CD4-positive, alpha-beta memory T cell (primary cell): ENCODE measurements at regions of chr11 and their contacts with region 1.

Region 1: GRCh38 chr11:35165423-35166368 is 26.7 kb downstream of the CD44 start:
- DNase-seq: peak; percentile 96 to 98 (median 98)
- H3K4me3 ChIP-seq: peak overlapping the region; percentile 36 to 37
- H3K4me3 Mint-ChIP-seq: peak overlapping the region; percentile 77 to 87 (median 84)
- H3K27ac ChIP-seq: peak overlapping the region; percentile 96
- H3K27ac Mint-ChIP-seq: peak overlapping the region; percentile 93 to 100 (median 100)
- H3K4me1 ChIP-seq: peaks cover 98% of the 10 kb centered on the region
- H3K4me1 Mint-ChIP-seq: peaks cover 85 to 100% (median 94%) of the 10 kb centered on the region in 4 donors
- H3K27me3 ChIP-seq: no peaks in the 10 kb centered on the region
- H3K27me3 Mint-ChIP-seq: no peaks in the 10 kb centered on the region

Region 2: GRCh38 chr11:34860034-34860433 is 305.7 kb before region 1 on chr11:
- CTCF ChIA-PET with region 1: no interaction called
- POLR2A ChIA-PET with region 1: no interaction called
- intact Hi-C with region 1: no loop called
- DNase-seq: no peak
- H3K4me3 ChIP-seq: no peak overlapping the region
- H3K4me3 Mint-ChIP-seq: no peak overlapping the region
- H3K27ac ChIP-seq: no peak overlapping the region
- H3K27ac Mint-ChIP-seq: no peak overlapping the region
- H3K4me1 ChIP-seq: no peaks in the 10 kb centered on the region
- H3K4me1 Mint-ChIP-seq: no peaks in the 10 kb centered on the region
- H3K27me3 ChIP-seq: no peaks in the 10 kb centered on the region
- H3K27me3 Mint-ChIP-seq: no peaks in the 10 kb centered on the region

Region 3: GRCh38 chr11:35006389-35007128 is 159.1 kb before region 1 on chr11:
- CTCF ChIA-PET with region 1: interaction called, 45 read pairs
- POLR2A ChIA-PET with region 1: interaction called, 47 read pairs
- intact Hi-C with region 1: no loop called
- DNase-seq: peak in 3 of 5 donors; percentile 11 to 48 (median 16)
- H3K4me3 ChIP-seq: peak overlapping the region in 1 of 2 donors; percentile 10
- H3K4me3 Mint-ChIP-seq: peak overlapping the region in 7 of 8 donors; percentile 7 to 79 (median 47)
- H3K27ac ChIP-seq: no peak overlapping the region
- H3K27ac Mint-ChIP-seq: peak overlapping the region; percentile 72 to 88 (median 81)
- H3K4me1 ChIP-seq: peaks cover 32% of the 10 kb centered on the region
- H3K4me1 Mint-ChIP-seq: peaks cover 23 to 62% (median 45%) of the 10 kb centered on the region in 4 donors
- H3K27me3 ChIP-seq: no peaks in the 10 kb centered on the region
- H3K27me3 Mint-ChIP-seq: no peaks in the 10 kb centered on the region

Region 4: DNA sequence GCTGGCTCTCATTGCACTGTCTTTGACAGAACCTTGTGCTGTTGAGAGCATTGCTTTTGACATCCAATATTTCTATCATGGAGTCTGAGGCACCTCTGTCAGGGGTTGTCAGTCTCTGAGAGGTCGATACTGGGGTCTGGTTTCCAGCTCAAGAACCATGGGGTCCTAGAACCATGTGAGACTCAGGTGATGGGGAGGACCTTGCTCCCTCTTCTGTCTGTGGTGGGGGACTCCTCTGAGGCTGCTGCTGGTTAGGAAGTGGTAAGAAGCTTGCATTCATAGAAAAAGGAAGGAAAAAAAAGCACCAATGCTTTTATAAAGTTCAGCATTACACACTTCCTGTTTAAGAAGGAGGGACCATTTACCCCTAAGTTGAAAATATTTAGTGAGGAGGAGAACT is 118.5 kb before region 1 on chr11:
- CTCF ChIA-PET with region 1: interaction called, 10 read pairs
- POLR2A ChIA-PET with region 1: interaction called, 87 read pairs
- intact Hi-C with region 1: loop called (anchors 1 kb)
- DNase-seq: peak; percentile 73 to 81 (median 77)
- H3K4me3 ChIP-seq: peak overlapping the region in 1 of 2 donors; percentile 17
- H3K4me3 Mint-ChIP-seq: peak overlapping the region in 7 of 8 donors; percentile 47 to 84 (median 65)
- H3K27ac ChIP-seq: peak overlapping the region; percentile 91
- H3K27ac Mint-ChIP-seq: peak overlapping the region; percentile 96 to 100 (median 100)
- H3K4me1 ChIP-seq: peaks cover 87% of the 10 kb centered on the region
- H3K4me1 Mint-ChIP-seq: peaks cover 63 to 93% (median 79%) of the 10 kb centered on the region in 4 donors
- H3K27me3 ChIP-seq: no peaks in the 10 kb centered on the region
- H3K27me3 Mint-ChIP-seq: no peaks in the 10 kb centered on the region

Region 5: DNA sequence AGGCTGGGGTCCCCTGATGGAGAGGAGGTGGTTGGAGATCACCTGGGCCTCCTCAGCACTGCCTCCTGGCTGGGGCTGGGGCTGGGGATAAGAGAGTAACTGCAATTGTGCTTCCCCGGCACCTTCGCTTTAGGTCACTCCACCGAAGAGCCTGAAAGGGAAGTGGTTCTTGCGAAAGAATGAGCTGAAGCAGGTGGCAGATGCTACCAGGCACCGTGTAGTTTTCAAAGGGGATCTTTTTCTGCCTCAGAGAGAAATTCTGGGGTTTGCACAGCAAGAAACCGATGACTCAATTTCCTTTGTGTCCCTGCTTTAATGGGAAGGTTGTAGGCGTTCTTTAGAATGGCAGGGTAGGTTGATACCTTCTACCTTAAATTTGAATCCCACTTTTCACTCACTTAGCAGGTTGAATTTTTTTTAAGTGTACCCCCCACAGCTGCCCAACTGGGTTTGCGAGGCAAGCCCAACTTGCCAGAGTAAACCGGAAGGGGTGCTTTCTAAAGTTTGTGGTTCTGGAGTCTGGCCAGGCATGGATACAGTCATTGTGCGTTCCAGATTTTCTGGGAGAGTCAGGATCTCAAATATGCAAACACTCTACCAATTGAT is 21.5 kb before region 1 on chr11:
- CTCF ChIA-PET with region 1: interaction called, 151 read pairs
- POLR2A ChIA-PET with region 1: interaction called, 1,106 read pairs
- intact Hi-C with region 1: loop called (anchors 1 kb)
- DNase-seq: peak; percentile 67 to 90 (median 76)
- H3K4me3 ChIP-seq: peak overlapping the region; percentile 55 to 59
- H3K4me3 Mint-ChIP-seq: peak overlapping the region; percentile 83 to 99 (median 98)
- H3K27ac ChIP-seq: peak overlapping the region; percentile 73
- H3K27ac Mint-ChIP-seq: peak overlapping the region; percentile 93 to 100 (median 95)
- H3K4me1 ChIP-seq: peaks cover 72% of the 10 kb centered on the region
- H3K4me1 Mint-ChIP-seq: peaks cover 60 to 88% (median 70%) of the 10 kb centered on the region in 4 donors
- H3K27me3 ChIP-seq: no peaks in the 10 kb centered on the region
- H3K27me3 Mint-ChIP-seq: no peaks in the 10 kb centered on the region

Region 6: GRCh38 chr11:35214792-35215193 is 49.1 kb after region 1 on chr11:
- CTCF ChIA-PET with region 1: interaction called, 3 read pairs
- POLR2A ChIA-PET with region 1: interaction called, 3 read pairs
- intact Hi-C with region 1: loop called (anchors 1 kb)
- DNase-seq: peak in 1 of 5 donors; percentile 77
- H3K4me3 ChIP-seq: no peak overlapping the region
- H3K4me3 Mint-ChIP-seq: peak overlapping the region in 6 of 8 donors; percentile 7 to 76 (median 16)
- H3K27ac ChIP-seq: no peak overlapping the region
- H3K27ac Mint-ChIP-seq: peak overlapping the region; percentile 78 to 99 (median 91)
- H3K4me1 ChIP-seq: peaks cover 65% of the 10 kb centered on the region
- H3K4me1 Mint-ChIP-seq: peaks cover 57 to 92% (median 73%) of the 10 kb centered on the region in 4 donors
- H3K27me3 ChIP-seq: no peaks in the 10 kb centered on the region
- H3K27me3 Mint-ChIP-seq: no peaks in the 10 kb centered on the region

Region 7: GRCh38 chr11:35305670-35306382 is 140.1 kb after region 1 on chr11:
- CTCF ChIA-PET with region 1: interaction called, 12 read pairs
- POLR2A ChIA-PET with region 1: interaction called, 15 read pairs
- intact Hi-C with region 1: loop called (anchors 5 kb)
- DNase-seq: peak in 4 of 5 donors; percentile 35 to 49 (median 44)
- H3K4me3 ChIP-seq: no peak overlapping the region
- H3K4me3 Mint-ChIP-seq: peak overlapping the region; percentile 58 to 85 (median 79)
- H3K27ac ChIP-seq: no peak overlapping the region
- H3K27ac Mint-ChIP-seq: peak overlapping the region; percentile 8 to 95 (median 90)
- H3K4me1 ChIP-seq: peaks cover 24% of the 10 kb centered on the region
- H3K4me1 Mint-ChIP-seq: peaks cover 15 to 29% (median 25%) of the 10 kb centered on the region in 4 donors
- H3K27me3 ChIP-seq: no peaks in the 10 kb centered on the region
- H3K27me3 Mint-ChIP-seq: no peaks in the 10 kb centered on the region